BJ (cell line): ENCODE measurements at regions of chr11 and their contacts with region 1.

Region 1: DNA sequence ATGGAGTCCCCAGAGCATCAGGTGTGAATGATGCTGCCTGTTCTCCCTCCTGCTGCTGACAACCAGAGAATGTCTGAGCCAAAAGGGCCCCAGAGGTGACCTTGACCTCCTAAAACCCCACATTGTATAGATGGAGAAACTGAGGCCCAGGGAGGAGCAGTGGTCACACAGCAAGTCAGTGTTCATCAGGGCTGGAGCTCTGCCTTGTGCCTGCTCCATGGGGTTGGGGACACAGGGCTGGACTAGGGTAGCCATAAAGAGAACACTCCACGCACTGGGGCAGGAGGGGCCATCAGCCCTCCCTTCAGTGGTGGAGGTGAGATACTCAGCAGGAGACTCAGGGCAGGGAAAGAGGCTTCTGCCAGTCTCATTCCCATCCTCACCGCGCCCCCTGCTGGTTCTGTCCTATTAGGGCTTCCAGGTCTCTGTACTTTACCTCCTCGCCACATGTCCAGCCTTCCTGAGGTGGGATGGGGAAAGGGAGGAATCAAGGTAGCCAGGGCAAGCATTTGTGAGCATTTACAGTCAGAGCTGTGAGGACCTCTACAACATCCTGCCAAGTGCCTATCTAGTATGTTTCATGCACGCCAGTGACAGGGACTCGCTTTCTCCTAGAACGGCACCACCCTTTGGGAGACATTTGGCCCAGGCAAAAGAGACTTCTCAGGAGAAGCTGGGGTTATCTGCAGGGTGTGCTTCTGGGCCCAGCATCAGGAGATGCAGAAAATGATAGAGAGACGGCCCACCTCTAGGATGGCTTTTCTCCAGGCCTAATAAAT is 43.2 kb downstream of the NEU3 start:
- DNase-seq: no peak
- H3K4me3 ChIP-seq: no peak overlapping the region
- H3K27me3 ChIP-seq: no peaks in the 10 kb centered on the region; the same call in 1 of the 2 replicates
- CTCF ChIP-seq: peak; percentile 86

Region 2: DNA sequence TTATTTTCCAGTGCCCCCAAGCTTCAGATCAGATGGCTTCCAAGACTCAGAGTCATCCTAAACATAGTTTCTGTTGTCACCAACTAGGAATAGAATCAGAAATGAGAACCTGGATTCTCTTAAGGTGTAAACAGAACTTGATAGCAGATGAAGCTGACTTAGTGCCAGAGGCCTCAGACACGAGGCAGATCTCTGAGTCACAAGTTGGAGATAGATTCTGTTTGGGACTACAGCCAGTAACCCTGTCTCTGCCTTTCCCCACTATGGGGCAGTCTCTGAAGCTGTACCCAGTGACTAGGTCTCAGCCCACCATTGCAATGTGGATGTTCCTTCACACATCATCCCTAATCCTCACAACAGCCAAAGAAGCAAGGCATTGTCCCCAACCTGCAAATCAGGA is 17.8 kb before region 1 on chr11:
- CTCF ChIA-PET with region 1: interaction called, 33 read pairs
- POLR2A ChIA-PET with region 1: no interaction called
- DNase-seq: peak; percentile 11
- H3K4me3 ChIP-seq: no peak overlapping the region
- H3K27me3 ChIP-seq: no peaks in the 10 kb centered on the region
- CTCF ChIP-seq: peak; percentile 19; the same call in 1 of the 2 replicates

Region 3: DNA sequence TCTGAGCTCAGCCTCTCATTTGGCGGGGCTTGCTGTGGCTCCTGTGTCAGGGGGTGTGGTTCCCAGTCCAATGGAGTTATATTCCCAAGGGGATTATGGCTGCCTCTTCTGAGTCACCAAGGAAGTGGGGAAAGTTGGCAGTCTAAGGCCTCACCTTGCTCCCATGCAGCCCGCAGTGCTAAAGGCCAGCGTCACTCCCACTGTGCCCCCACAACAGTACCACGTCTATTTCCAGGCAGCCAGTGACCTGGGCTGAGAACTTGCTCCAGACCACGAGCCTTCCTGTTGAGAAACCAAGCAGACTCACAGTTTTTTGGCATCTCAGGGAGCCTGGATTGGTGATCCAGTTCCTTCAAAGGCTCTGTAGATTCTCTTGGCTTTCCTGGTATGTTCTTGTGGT is 19.1 kb after region 1 on chr11:
- CTCF ChIA-PET with region 1: interaction called, 19 read pairs
- POLR2A ChIA-PET with region 1: no interaction called
- DNase-seq: no peak
- H3K4me3 ChIP-seq: no peak overlapping the region
- H3K27me3 ChIP-seq: peaks cover 9% of the 10 kb centered on the region
- CTCF ChIP-seq: no peak